Natural killer cell (primary cell): ENCODE measurements at regions of chr10 and their contacts with region 1.

Region 1: DNA sequence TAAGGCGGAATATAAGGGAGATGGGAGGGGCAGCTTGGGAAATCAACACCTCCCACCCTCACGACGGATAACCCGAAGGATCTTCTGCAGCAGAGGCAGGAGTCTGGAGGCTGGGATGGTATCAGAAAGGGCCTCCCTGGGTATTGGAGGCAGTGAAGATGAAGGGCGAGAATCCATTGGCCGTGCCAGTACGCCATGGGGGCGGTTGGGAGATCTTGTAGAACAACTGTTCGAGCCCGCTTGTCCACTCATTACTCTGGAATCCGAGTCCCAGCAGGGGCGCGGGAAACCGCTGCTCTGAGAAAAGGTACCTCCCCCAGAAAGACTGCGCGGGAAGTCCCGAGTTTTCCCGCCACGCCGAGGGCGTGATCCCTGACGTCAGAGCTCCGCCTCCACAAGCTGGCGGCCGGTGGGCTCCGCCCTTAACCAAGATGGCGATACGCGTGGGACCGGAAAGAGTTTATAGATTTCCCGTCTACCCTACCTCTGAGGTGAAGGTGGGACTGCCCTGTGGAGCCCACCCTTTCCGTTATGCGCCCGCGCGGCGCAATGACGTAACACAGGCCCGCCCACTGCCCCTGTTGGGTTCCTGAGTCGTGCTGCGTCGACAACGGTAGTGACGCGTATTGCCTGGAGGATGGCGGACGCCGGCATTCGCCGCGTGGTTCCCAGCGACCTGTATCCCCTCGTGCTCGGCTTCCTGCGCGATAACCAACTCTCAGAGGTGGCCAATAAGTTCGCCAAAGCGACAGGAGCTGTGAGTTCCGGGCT is at the start of gene NOLC1:
- DNase-seq: peak; percentile 100
- ATAC-seq: peak; percentile 88 to 97 (median 88)
- H3K4me3 ChIP-seq: peak within 1 kb of the TSS; percentile 90
- H3K4me3 Mint-ChIP-seq: peak within 1 kb of the TSS; percentile 93
- H3K27ac ChIP-seq: peak within 1 kb of the TSS; percentile 97
- H3K27ac Mint-ChIP-seq: peak within 1 kb of the TSS; percentile 93 to 97
- H3K4me1 ChIP-seq: peaks cover 24% of the 10 kb centered on the region
- H3K4me1 Mint-ChIP-seq: peaks cover 20 to 31% of the 10 kb centered on the region in 2 donors
- H3K27me3 ChIP-seq: no peaks in the 10 kb centered on the region
- H3K27me3 Mint-ChIP-seq: no peaks in the 10 kb centered on the region
- CTCF ChIP-seq: no peak
- total RNA-seq, gene NOLC1: 42.6 to 47.5 (median 43.4) TPM

Region 2: GRCh38 chr10:101818119-101818871 is 333.7 kb before region 1 on chr10 and contains the start of gene OGA:
- intact Hi-C with region 1: loop called (anchors 1 kb)
- DNase-seq: peak; percentile 93 to 99
- ATAC-seq: peak; percentile 89 to 98 (median 90)
- H3K4me3 ChIP-seq: peak within 1 kb of the TSS; percentile 95
- H3K4me3 Mint-ChIP-seq: peak within 1 kb of the TSS; percentile 97
- H3K27ac ChIP-seq: peak within 1 kb of the TSS; percentile 77
- H3K27ac Mint-ChIP-seq: peak within 1 kb of the TSS; percentile 89 to 90
- H3K4me1 ChIP-seq: peaks cover 27% of the 10 kb centered on the region
- H3K4me1 Mint-ChIP-seq: peaks cover 55 to 62% of the 10 kb centered on the region in 2 donors
- H3K27me3 ChIP-seq: no peaks in the 10 kb centered on the region
- H3K27me3 Mint-ChIP-seq: no peaks in the 10 kb centered on the region
- CTCF ChIP-seq: no peak
- total RNA-seq, gene OGA: 427 to 488 (median 481) TPM

Region 3: GRCh38 chr10:102120142-102120990 is 31.6 kb before region 1 on chr10 and contains the start of gene LDB1:
- intact Hi-C with region 1: loop called (anchors 1 kb)
- DNase-seq: peak; percentile 66 to 88
- ATAC-seq: peak; percentile 61 to 84 (median 76)
- H3K4me3 ChIP-seq: peak within 1 kb of the TSS; percentile 84
- H3K4me3 Mint-ChIP-seq: peak within 1 kb of the TSS; percentile 87
- H3K27ac ChIP-seq: peak within 1 kb of the TSS; percentile 96
- H3K27ac Mint-ChIP-seq: peak within 1 kb of the TSS; percentile 77 to 95
- H3K4me1 ChIP-seq: peaks cover 57% of the 10 kb centered on the region
- H3K4me1 Mint-ChIP-seq: peaks cover 43 to 56% of the 10 kb centered on the region in 2 donors
- H3K27me3 ChIP-seq: no peaks in the 10 kb centered on the region
- H3K27me3 Mint-ChIP-seq: no peaks in the 10 kb centered on the region
- CTCF ChIP-seq: no peak
- total RNA-seq, gene LDB1: 103 to 109 (median 104) TPM

Region 4: DNA sequence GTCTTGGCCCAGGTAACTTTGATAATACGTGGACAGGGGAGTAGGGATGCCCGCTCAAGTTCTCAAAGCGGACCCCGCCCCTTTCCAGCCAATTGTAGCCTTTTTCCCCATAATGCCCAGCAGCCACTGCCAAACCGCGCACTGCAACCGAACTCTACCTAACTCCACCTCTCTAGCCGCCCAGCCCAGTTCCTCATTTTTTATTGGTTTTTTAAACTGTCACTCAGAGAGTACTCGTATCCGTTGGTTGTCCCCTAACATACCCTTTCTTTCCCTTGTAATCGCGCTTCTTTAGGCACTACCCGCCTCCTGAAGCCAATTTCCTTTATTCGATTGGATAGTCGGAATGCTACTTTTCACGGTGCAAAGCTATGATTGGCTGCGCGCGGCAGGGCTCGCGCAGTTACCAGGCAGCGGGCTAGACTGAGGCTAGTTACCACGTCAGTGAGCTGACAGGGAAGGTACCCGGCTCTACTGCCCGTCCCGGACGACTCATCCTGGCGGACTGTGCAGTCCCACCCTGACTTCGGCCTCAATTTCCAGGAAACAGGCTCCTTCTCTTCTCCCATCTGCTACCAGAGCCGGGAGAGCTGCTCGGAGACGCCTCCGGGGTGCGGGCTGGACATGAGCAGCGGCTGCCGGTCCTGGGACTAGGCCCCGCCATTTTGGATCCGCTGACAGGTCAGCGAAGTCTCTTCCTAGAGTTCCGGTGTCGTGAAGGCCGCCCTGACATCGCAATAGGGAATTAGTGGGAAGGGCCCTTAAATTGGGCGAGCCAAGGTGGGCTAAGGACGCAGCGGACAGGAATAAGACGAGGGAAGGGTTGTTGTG is 93.4 kb after region 1 on chr10 and contains the start of gene GBF1:
- intact Hi-C with region 1: loop called (anchors 1 kb)
- DNase-seq: peak; percentile 88 to 97
- ATAC-seq: peak; percentile 80 to 94 (median 84)
- H3K4me3 ChIP-seq: peak within 1 kb of the TSS; percentile 94
- H3K4me3 Mint-ChIP-seq: peak within 1 kb of the TSS; percentile 98
- H3K27ac ChIP-seq: peak within 1 kb of the TSS; percentile 89
- H3K27ac Mint-ChIP-seq: peak within 1 kb of the TSS; percentile 98 to 99
- H3K4me1 ChIP-seq: peaks cover 31% of the 10 kb centered on the region
- H3K4me1 Mint-ChIP-seq: peaks cover 47 to 60% of the 10 kb centered on the region in 2 donors
- H3K27me3 ChIP-seq: peaks cover 15% of the 10 kb centered on the region
- H3K27me3 Mint-ChIP-seq: peaks cover 7 to 19% of the 10 kb centered on the region in 2 donors
- CTCF ChIP-seq: no peak
- total RNA-seq, gene GBF1: 48.2 to 52.5 (median 50.9) TPM

Region 5: GRCh38 chr10:102450194-102450938 is 298.4 kb after region 1 on chr10:
- intact Hi-C with region 1: loop called (anchors 1 kb)
- DNase-seq: peak; percentile 86 to 97
- ATAC-seq: peak; percentile 81 to 95 (median 85)
- H3K4me3 ChIP-seq: peak overlapping the region; percentile 95
- H3K4me3 Mint-ChIP-seq: peak overlapping the region; percentile 95
- H3K27ac ChIP-seq: peak overlapping the region; percentile 90
- H3K27ac Mint-ChIP-seq: peak overlapping the region; percentile 88 to 90
- H3K4me1 ChIP-seq: peaks cover 29% of the 10 kb centered on the region
- H3K4me1 Mint-ChIP-seq: peaks cover 20 to 23% of the 10 kb centered on the region in 2 donors
- H3K27me3 ChIP-seq: no peaks in the 10 kb centered on the region
- H3K27me3 Mint-ChIP-seq: no peaks in the 10 kb centered on the region
- CTCF ChIP-seq: no peak